ENCODE measurements at regions of chr3 and their contacts with region 1.

Region 1: GRCh38 chr3:36893137-36893557 is 51.7 kb downstream of the TRANK1 start:
- DNase-seq: no peak
- ATAC-seq: peak; percentile 56
- H3K4me3 ChIP-seq: no peak overlapping the region
- H3K27ac ChIP-seq: no peak overlapping the region; the same call in 1 of the 2 replicates
- H3K4me1 ChIP-seq: peaks cover 35% of the 10 kb centered on the region
- H3K27me3 ChIP-seq: no peaks in the 10 kb centered on the region
- CTCF ChIP-seq: no peak
- EP300 ChIP-seq: no peak
- POLR2A ChIP-seq: no peak
- RAD21 ChIP-seq: no peak

Region 2: GRCh38 chr3:36876181-36876936 is 16.8 kb before region 1 on chr3:
- CTCF ChIA-PET with region 1: interaction called, 25 read pairs
- POLR2A ChIA-PET with region 1: interaction called, 17 read pairs
- RAD21 ChIA-PET with region 1: interaction called, 19 read pairs
- SMC1A ChIA-PET with region 1: interaction called, 34 read pairs
- in situ Hi-C with region 1: no loop called
- intact Hi-C with region 1: loop called (anchors 2 kb)
- DNase-seq: peak; percentile 89
- ATAC-seq: peak; percentile 99
- H3K4me3 ChIP-seq: peak overlapping the region; percentile 12; the same call in 1 of the 2 replicates
- H3K27ac ChIP-seq: peak overlapping the region; percentile 45; the same call in 1 of the 2 replicates
- H3K4me1 ChIP-seq: peaks cover 11% of the 10 kb centered on the region
- H3K27me3 ChIP-seq: no peaks in the 10 kb centered on the region
- CTCF ChIP-seq: no peak
- EP300 ChIP-seq: peak; percentile 79 to 84; a peak in 3 of 4 replicates
- POLR2A ChIP-seq: no peak
- RAD21 ChIP-seq: no peak

Region 3: GRCh38 chr3:36904641-36905040 is 11.5 kb after region 1 on chr3:
- CTCF ChIA-PET with region 1: interaction called, 17 read pairs
- POLR2A ChIA-PET with region 1: interaction called, 9 read pairs
- RAD21 ChIA-PET with region 1: interaction called, 7 read pairs
- SMC1A ChIA-PET with region 1: interaction called, 76 read pairs
- in situ Hi-C with region 1: no loop called
- intact Hi-C with region 1: no loop called
- DNase-seq: no peak
- ATAC-seq: peak; percentile 16; the same call in 2 of the 3 replicates
- H3K4me3 ChIP-seq: no peak overlapping the region
- H3K27ac ChIP-seq: no peak overlapping the region
- H3K4me1 ChIP-seq: peaks cover 7% of the 10 kb centered on the region
- H3K27me3 ChIP-seq: peaks cover 0 to 1% of the 10 kb centered on the region in 2 experiments; a peak in 1 of 4 replicates
- CTCF ChIP-seq: peak; percentile 38 to 62 (median 51); a peak in 4 of 6 replicates
- EP300 ChIP-seq: no peak
- POLR2A ChIP-seq: no peak
- RAD21 ChIP-seq: peak; percentile 55

Region 4: GRCh38 chr3:36911990-36912804 is 19.1 kb after region 1 on chr3:
- CTCF ChIA-PET with region 1: interaction called, 5 read pairs
- POLR2A ChIA-PET with region 1: interaction called, 9 read pairs
- RAD21 ChIA-PET with region 1: interaction called, 16 read pairs
- SMC1A ChIA-PET with region 1: interaction called, 76 read pairs
- in situ Hi-C with region 1: no loop called
- intact Hi-C with region 1: loop called (anchors 2 kb)
- DNase-seq: peak; percentile 97
- ATAC-seq: peak; percentile 90
- H3K4me3 ChIP-seq: peak overlapping the region; percentile 34; the same call in 1 of the 2 replicates
- H3K27ac ChIP-seq: peak overlapping the region; percentile 75
- H3K4me1 ChIP-seq: peaks cover 23% of the 10 kb centered on the region
- H3K27me3 ChIP-seq: no peaks in the 10 kb centered on the region
- CTCF ChIP-seq: no peak
- EP300 ChIP-seq: peak; percentile 32 to 61; a peak in 3 of 4 replicates
- POLR2A ChIP-seq: no peak
- RAD21 ChIP-seq: no peak

Region 5: DNA sequence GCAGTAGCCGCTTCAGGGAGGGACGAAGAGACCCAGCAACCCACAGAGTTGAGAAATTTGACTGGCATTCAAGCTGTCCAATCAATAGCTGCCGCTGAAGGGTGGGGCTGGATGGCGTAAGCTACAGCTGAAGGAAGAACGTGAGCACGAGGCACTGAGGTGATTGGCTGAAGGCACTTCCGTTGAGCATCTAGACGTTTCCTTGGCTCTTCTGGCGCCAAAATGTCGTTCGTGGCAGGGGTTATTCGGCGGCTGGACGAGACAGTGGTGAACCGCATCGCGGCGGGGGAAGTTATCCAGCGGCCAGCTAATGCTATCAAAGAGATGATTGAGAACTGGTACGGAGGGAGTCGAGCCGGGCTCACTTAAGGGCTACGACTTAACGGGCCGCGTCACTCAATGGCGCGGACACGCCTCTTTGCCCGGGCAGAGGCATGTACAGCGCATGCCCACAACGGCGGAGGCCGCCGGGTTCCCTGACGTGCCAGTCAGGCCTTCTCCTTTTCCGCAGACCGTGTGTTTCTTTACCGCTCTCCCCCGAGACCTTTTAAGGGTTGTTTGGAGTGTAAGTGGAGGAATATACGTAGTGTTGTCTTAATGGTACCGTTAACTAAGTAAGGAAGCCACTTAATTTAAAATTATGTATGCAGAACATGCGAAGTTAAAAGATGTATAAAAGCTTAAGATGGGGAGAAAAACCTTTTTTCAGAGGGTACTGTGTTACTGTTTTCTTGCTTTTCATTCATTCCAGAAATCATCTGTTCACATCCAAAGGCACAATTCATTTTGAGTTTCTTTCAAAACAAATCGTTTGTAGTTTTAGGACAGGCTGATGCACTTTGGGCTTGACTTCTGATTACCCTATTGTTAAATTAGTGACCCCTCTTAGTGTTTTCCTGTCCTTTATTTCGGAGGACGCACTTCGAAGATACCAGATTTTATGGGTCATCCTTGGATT is 100.5 kb after region 1 on chr3 and contains the start of gene MLH1:
- CTCF ChIA-PET with region 1: interaction called, 7 read pairs
- POLR2A ChIA-PET with region 1: interaction called, 5 read pairs
- RAD21 ChIA-PET with region 1: interaction called, 4 read pairs
- SMC1A ChIA-PET with region 1: interaction called, 9 read pairs
- in situ Hi-C with region 1: no loop called
- intact Hi-C with region 1: loop called (anchors 5 kb)
- DNase-seq: peak; percentile 100
- ATAC-seq: peak; percentile 88
- H3K4me3 ChIP-seq: peak within 1 kb of the TSS; percentile 97
- H3K27ac ChIP-seq: peak within 1 kb of the TSS; percentile 92
- H3K4me1 ChIP-seq: no peaks in the 10 kb centered on the region
- H3K27me3 ChIP-seq: no peaks in the 10 kb centered on the region
- CTCF ChIP-seq: no peak
- EP300 ChIP-seq: no peak
- POLR2A ChIP-seq: peak; percentile 85
- RAD21 ChIP-seq: no peak
- polyA plus RNA-seq, gene MLH1: 58.6 to 67.3 TPM

Measured in GM12878 (cell line).